ENCODE measurements at regions of chr15 and their contacts with region 1.

Region 1: DNA sequence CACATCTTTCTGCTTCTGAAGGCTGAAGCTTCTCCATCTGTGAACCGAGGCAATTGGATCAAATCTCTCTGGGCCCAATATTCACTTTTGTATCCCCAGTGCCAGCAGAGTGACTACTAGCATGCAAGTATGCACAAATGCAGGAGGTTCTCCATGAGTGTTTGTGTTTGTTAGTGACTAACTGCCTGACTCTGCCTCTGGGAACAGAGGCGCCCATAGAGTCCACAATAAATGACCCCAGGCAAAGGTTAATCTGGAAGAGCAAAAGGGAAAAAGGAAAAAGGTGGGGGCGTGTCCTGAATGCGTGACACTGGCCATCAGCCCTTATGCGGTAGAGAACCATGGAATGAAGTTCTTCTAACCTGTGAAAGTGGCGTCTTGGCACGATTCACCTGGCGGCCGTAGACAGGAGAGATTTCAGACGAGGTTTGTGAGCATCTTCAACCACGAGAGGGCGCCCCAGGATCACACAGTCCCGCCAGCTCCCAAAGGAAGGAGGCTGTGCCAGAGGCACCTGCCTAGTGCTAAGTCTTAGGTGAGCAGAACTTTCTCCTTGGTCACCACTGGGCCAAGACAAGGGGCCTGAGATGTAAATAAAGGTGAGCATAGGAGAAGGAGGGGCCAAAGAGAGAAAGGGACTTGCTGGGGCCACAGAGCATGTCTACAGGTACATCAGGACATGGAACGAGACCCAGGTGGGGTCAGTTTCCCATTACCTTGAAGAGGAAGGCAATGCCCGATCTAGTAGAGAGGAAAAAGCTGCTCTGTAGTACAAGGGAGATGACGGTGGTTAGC is 44.2 kb downstream of the RBPMS2 start:
- DNase-seq: peak; percentile 68 to 93 (median 86)
- ATAC-seq: peak; percentile 77
- H3K4me3 ChIP-seq: no peak overlapping the region
- H3K4me3 Mint-ChIP-seq: no peak overlapping the region
- H3K27ac ChIP-seq: no peak overlapping the region
- H3K27ac Mint-ChIP-seq: no peak overlapping the region
- H3K4me1 ChIP-seq: no peaks in the 10 kb centered on the region
- H3K4me1 Mint-ChIP-seq: peaks cover 5% of the 10 kb centered on the region
- H3K27me3 ChIP-seq: no peaks in the 10 kb centered on the region
- H3K27me3 Mint-ChIP-seq: no peaks in the 10 kb centered on the region
- CTCF ChIP-seq: peak; percentile 98

Region 2: GRCh38 chr15:64209680-64210334 is 521.4 kb before region 1 on chr15:
- CTCF ChIA-PET with region 1: interaction called, 4 read pairs
- POLR2A ChIA-PET with region 1: no interaction called
- intact Hi-C with region 1: loop called (anchors 5 kb)
- DNase-seq: peak in 2 of 9 experiments; percentile 20 to 39
- ATAC-seq: no peak
- H3K4me3 ChIP-seq: no peak overlapping the region
- H3K4me3 Mint-ChIP-seq: no peak overlapping the region
- H3K27ac ChIP-seq: no peak overlapping the region
- H3K27ac Mint-ChIP-seq: no peak overlapping the region
- H3K4me1 ChIP-seq: no peaks in the 10 kb centered on the region
- H3K4me1 Mint-ChIP-seq: no peaks in the 10 kb centered on the region
- H3K27me3 ChIP-seq: no peaks in the 10 kb centered on the region
- H3K27me3 Mint-ChIP-seq: no peaks in the 10 kb centered on the region
- CTCF ChIP-seq: peak; percentile 59

Region 3: DNA sequence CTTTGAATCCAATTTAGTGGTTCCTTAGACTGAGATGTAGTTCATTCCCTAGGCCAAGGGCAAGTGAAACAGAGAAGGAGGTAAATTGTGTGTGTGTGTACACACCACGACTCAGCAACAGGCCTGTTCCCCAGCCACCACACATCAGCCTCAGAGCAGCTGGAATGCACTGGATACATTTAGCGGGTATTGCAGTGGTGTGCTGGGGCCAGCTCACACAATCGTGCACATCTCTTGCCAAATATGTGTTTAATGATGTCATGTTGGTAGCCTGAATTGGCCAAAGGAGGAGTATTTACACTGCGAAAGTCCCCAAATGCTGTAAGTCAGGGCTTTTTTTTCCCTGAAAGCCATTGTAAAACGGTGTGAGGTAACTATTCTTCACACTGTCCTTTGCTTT is 38.1 kb before region 1 on chr15:
- CTCF ChIA-PET with region 1: interaction called, 355 read pairs
- POLR2A ChIA-PET with region 1: no interaction called
- intact Hi-C with region 1: no loop called
- DNase-seq: peak in 1 of 9 experiments; percentile 18
- ATAC-seq: no peak
- H3K4me3 ChIP-seq: no peak overlapping the region
- H3K4me3 Mint-ChIP-seq: no peak overlapping the region
- H3K27ac ChIP-seq: no peak overlapping the region
- H3K27ac Mint-ChIP-seq: peak overlapping the region; percentile 74
- H3K4me1 ChIP-seq: peaks cover 6% of the 10 kb centered on the region
- H3K4me1 Mint-ChIP-seq: peaks cover 28% of the 10 kb centered on the region
- H3K27me3 ChIP-seq: no peaks in the 10 kb centered on the region
- H3K27me3 Mint-ChIP-seq: no peaks in the 10 kb centered on the region
- CTCF ChIP-seq: no peak

Region 4: GRCh38 chr15:64717735-64718495 is 13.3 kb before region 1 on chr15:
- CTCF ChIA-PET with region 1: interaction called, 30 read pairs
- POLR2A ChIA-PET with region 1: interaction called, 3 read pairs
- intact Hi-C with region 1: no loop called
- DNase-seq: peak in 3 of 9 experiments; percentile 12 to 60 (median 37)
- ATAC-seq: peak; percentile 51
- H3K4me3 ChIP-seq: no peak overlapping the region
- H3K4me3 Mint-ChIP-seq: peak overlapping the region; percentile 15
- H3K27ac ChIP-seq: peak overlapping the region in 1 of 2 experiments; percentile 36
- H3K27ac Mint-ChIP-seq: peak overlapping the region; percentile 86
- H3K4me1 ChIP-seq: peaks cover 17% of the 10 kb centered on the region
- H3K4me1 Mint-ChIP-seq: peaks cover 18% of the 10 kb centered on the region
- H3K27me3 ChIP-seq: no peaks in the 10 kb centered on the region
- H3K27me3 Mint-ChIP-seq: no peaks in the 10 kb centered on the region
- CTCF ChIP-seq: no peak

Region 5: DNA sequence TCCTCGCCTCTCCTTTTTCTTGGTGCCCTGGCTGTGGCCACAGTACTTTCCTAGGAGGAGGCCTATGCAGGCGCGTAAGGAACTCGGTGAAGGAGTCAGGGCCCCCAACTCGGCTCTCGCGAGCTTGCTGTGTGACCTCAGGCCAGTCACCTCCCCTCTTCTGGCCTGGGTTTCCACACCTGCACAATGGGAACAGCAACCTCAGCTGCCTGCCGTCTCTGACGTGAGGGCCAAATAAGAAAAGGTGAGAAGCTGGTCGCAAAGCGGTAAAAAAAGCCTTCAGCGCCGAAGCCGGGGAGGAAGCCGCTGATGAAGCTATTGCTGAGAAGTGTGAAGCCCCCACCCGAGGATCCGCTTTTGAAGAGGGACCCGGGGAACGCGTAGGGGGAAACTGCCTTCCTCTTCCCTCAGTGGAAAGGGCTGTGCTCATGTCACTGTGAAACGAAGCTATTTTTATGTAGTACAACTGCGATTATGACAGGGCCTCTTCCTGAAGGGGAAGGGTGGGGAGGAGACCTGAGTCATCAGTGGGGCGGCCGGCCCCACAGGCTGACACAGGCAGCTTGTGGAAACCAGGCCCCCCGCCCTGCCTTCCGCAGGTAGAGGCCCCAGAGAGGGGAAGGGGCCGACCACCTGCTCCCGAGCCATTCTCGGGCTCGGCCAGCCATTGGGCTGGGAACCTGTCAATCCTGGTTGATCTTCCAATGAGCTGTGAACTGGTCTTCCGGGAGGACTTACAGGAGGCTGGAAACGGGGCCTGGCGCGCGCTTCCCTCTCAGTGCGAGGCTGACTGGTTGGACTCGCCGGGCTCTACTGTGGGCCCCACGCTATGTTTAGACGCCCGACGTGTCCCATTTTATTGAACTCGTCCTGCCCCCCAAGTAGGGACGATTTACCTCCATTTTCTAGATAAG is 162.5 kb after region 1 on chr15:
- CTCF ChIA-PET with region 1: interaction called, 154 read pairs
- POLR2A ChIA-PET with region 1: no interaction called
- intact Hi-C with region 1: no loop called
- DNase-seq: peak; percentile 82 to 98 (median 95)
- ATAC-seq: peak; percentile 70
- H3K4me3 ChIP-seq: peak overlapping the region; percentile 42 to 64
- H3K4me3 Mint-ChIP-seq: peak overlapping the region; percentile 87
- H3K27ac ChIP-seq: peak overlapping the region; percentile 73 to 88
- H3K27ac Mint-ChIP-seq: peak overlapping the region; percentile 99
- H3K4me1 ChIP-seq: peaks cover 57% of the 10 kb centered on the region
- H3K4me1 Mint-ChIP-seq: peaks cover 66% of the 10 kb centered on the region
- H3K27me3 ChIP-seq: no peaks in the 10 kb centered on the region
- H3K27me3 Mint-ChIP-seq: no peaks in the 10 kb centered on the region
- CTCF ChIP-seq: no peak

Region 6: GRCh38 chr15:65077981-65078352 is 346.8 kb after region 1 on chr15:
- CTCF ChIA-PET with region 1: interaction called, 5 read pairs
- POLR2A ChIA-PET with region 1: no interaction called
- intact Hi-C with region 1: loop called in 1 of 2 experiments (anchors 5 kb)
- DNase-seq: peak in 8 of 9 experiments; percentile 24 to 63 (median 48)
- ATAC-seq: peak; percentile 71
- H3K4me3 ChIP-seq: no peak overlapping the region
- H3K4me3 Mint-ChIP-seq: no peak overlapping the region
- H3K27ac ChIP-seq: no peak overlapping the region
- H3K27ac Mint-ChIP-seq: no peak overlapping the region
- H3K4me1 ChIP-seq: peaks cover 14% of the 10 kb centered on the region
- H3K4me1 Mint-ChIP-seq: peaks cover 18% of the 10 kb centered on the region
- H3K27me3 ChIP-seq: peaks cover 3% of the 10 kb centered on the region in 2 experiments
- H3K27me3 Mint-ChIP-seq: peaks cover 39% of the 10 kb centered on the region
- CTCF ChIP-seq: peak; percentile 22

Region 7: DNA sequence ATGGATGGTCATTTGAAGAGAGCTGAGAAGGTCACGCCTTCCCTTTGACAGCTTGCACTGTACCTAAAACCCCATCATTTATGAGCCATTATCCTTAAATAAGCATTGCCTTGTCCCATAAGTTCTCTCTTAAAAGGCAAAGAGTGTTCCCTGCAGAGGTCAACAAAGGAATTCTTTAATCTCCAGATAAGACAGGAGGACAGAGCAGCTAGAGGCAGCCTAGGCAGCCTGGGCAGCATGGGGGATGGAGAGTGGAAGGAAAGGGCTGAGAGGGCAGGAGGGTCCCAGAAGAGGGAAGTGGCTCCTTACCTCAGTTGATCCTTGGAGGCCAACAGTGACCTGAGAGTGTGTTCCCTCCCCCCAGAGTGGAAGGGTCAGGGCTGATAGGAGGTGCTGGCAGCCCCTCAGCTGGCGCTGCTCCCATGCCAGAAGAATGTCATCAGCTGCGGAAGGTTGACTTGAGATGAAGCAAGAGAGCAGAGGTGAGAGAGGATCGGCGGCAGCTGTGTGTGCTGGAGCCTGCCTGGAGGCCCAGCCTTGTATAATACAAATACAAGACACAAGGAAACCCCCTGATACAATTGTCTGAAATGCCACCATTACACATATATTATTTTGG is 358.1 kb after region 1 on chr15:
- CTCF ChIA-PET with region 1: no interaction called
- POLR2A ChIA-PET with region 1: no interaction called
- intact Hi-C with region 1: no loop called
- DNase-seq: no peak
- ATAC-seq: no peak
- H3K4me3 ChIP-seq: no peak overlapping the region
- H3K4me3 Mint-ChIP-seq: no peak overlapping the region
- H3K27ac ChIP-seq: no peak overlapping the region
- H3K27ac Mint-ChIP-seq: no peak overlapping the region
- H3K4me1 ChIP-seq: no peaks in the 10 kb centered on the region
- H3K4me1 Mint-ChIP-seq: no peaks in the 10 kb centered on the region
- H3K27me3 ChIP-seq: no peaks in the 10 kb centered on the region
- H3K27me3 Mint-ChIP-seq: no peaks in the 10 kb centered on the region
- CTCF ChIP-seq: no peak